ENCODE measurements at regions of chr3 and their contacts with region 1.

Region 1: DNA sequence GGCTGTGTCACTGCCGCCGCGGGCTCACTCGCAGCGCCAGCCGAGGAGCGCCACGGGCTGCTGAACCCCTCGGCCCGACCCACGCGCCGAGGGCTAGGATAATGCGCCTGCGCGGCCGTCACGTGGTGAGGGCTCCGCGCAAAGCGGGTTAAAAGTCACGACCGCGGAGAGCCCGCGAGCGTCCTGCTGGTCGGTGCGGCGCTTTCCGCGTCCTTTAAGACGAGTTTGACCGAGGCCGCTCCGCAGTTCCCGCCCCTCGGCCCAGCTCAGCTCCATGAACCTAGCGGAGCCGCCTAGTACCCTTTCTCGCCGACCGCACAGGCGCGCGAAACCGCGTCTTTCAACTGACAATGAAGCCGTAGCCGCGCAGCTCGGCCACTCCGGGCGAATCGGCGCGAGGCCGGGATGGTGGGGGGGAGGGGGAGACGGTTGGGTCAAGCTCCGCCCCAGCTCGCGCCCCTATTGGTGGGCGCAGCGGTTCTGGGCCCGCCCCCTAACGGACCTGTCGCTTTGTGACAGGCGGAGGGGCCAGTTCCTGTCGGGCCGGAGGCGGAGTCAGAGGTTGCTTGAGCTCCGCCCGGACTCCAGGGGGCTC is 636 bp upstream of the STT3B start:
- DNase-seq: peak; percentile 98
- ATAC-seq: peak; percentile 80
- H3K4me3 Mint-ChIP-seq: no peak overlapping the region
- H3K27ac Mint-ChIP-seq: peak overlapping the region; percentile 99
- H3K4me1 Mint-ChIP-seq: peaks cover 8% of the 10 kb centered on the region
- H3K27me3 Mint-ChIP-seq: no peaks in the 10 kb centered on the region

Region 2: DNA sequence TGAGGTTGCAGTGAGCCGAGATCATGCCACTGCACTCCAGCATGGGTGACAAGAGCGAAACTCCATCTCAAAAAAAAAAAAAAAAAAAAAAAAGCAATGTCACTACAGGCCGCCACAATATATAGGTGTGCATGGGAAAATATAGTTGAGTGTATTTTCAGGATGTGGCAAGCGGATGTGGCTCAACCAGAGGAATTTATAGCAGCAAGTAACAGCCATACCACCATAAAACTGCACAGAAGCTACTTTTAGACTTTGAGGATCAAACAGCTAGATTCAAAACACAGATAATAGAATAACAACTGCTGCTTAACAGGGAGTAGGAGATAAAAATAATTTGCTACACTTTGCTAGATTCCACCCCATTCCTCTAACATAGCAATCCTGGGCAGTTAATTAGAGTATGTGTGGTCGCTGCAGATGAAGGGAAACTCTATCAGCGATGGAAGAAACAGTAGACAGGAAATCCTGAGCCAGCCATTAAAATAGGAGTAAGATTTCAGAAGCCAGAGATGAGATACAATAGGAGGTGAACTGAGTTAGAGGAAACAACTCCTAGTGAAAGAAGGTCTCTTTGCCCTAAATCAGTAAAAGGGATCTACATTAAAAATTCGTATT is 318.1 kb before region 1 on chr3:
- POLR2A ChIA-PET with region 1: interaction called, 40 read pairs
- DNase-seq: no peak
- ATAC-seq: peak; percentile 84
- H3K4me3 Mint-ChIP-seq: peak overlapping the region; percentile 76
- H3K27ac Mint-ChIP-seq: peak overlapping the region; percentile 84
- H3K4me1 Mint-ChIP-seq: peaks cover 42% of the 10 kb centered on the region
- H3K27me3 Mint-ChIP-seq: no peaks in the 10 kb centered on the region

Region 3: GRCh38 chr3:31227131-31227562 is 304.9 kb before region 1 on chr3:
- POLR2A ChIA-PET with region 1: interaction called, 23 read pairs
- DNase-seq: no peak
- ATAC-seq: no peak
- H3K4me3 Mint-ChIP-seq: peak overlapping the region; percentile 76
- H3K27ac Mint-ChIP-seq: peak overlapping the region; percentile 88
- H3K4me1 Mint-ChIP-seq: peaks cover 60% of the 10 kb centered on the region
- H3K27me3 Mint-ChIP-seq: no peaks in the 10 kb centered on the region

Region 4: DNA sequence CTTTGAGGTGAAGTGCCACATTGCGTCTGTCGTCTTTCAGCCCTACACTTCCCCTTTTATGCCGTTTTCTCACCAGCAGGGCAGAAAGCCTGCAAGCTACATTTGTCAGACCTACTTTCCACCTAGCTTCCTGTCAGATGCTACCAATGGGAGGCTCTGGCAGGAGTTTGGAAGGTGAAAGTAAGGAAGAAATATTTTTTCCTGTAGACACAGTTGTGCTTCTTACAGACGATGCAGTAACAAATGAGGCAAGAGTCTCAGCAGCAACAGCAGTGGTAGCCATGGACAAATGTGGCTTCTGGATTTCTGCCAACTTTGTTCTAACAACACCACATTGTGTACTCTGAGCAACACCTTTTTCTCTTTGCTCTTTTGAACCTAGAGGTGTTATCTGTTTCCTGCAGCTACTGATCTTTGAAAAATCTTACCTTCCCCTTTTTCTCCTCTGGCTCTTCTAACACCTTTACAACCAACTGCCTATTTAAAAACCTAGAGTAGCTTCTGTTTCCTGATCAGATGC is 70.0 kb before region 1 on chr3:
- POLR2A ChIA-PET with region 1: interaction called, 34 read pairs
- DNase-seq: no peak
- ATAC-seq: peak; percentile 85
- H3K4me3 Mint-ChIP-seq: peak overlapping the region; percentile 26
- H3K27ac Mint-ChIP-seq: peak overlapping the region; percentile 70
- H3K4me1 Mint-ChIP-seq: peaks cover 14% of the 10 kb centered on the region
- H3K27me3 Mint-ChIP-seq: no peaks in the 10 kb centered on the region

Region 5: DNA sequence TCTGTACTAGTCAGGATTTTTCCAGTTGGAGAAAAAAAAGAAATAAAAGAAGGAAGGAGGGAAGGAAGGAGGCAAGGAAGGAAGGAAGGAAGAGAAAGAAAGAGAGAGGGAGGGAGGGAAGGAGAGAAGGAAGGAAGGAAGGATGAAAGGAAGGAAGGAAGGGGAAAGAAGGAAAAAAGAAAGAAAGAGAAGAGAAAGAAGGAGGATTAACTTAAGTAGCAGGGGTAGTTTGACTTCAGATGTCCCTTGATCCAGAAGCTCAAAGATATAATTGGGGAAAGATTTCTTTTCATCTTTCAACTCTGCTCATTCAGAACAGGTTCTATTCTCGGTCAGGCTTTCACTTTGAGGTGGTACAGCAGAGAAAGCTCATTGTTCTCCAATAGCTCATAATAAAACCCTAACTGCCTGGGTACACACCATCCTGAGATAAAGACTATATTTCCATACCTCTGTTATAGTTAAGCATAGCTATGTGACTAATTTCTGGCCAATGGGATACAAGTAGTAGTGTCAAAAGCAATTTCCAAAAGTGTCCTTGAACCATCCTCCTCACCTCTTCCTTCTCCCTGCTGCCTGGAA is 22.9 kb before region 1 on chr3:
- POLR2A ChIA-PET with region 1: interaction called, 32 read pairs
- DNase-seq: no peak
- ATAC-seq: peak; percentile 35
- H3K4me3 Mint-ChIP-seq: peak overlapping the region; percentile 67
- H3K27ac Mint-ChIP-seq: peak overlapping the region; percentile 72
- H3K4me1 Mint-ChIP-seq: peaks cover 47% of the 10 kb centered on the region
- H3K27me3 Mint-ChIP-seq: no peaks in the 10 kb centered on the region

Region 6: GRCh38 chr3:31515486-31516284 is 16.4 kb before region 1 on chr3:
- POLR2A ChIA-PET with region 1: interaction called, 58 read pairs
- DNase-seq: no peak
- ATAC-seq: no peak
- H3K4me3 Mint-ChIP-seq: no peak overlapping the region
- H3K27ac Mint-ChIP-seq: no peak overlapping the region
- H3K4me1 Mint-ChIP-seq: peaks cover under 1% of the 10 kb centered on the region
- H3K27me3 Mint-ChIP-seq: no peaks in the 10 kb centered on the region

Region 7: DNA sequence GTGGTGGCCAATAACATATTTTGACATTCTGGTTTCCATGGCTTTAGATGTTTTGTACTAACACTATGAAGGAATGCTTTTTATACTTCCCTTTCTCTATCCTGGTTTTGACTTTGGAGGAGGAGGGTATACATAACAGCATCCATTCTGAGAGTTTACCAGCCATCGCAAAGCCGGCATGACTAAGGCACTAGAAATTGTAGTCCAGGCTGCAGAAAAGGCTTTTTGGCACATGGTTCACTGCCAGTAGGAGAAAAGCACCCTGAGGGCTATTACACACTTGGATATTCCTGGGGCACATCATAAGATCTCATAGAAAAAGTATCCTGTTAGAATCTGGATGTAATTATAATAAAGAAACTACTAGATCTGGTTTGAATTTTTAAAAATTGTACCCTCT is 102.4 kb after region 1 on chr3:
- POLR2A ChIA-PET with region 1: interaction called, 10 read pairs
- DNase-seq: no peak
- ATAC-seq: no peak
- H3K4me3 Mint-ChIP-seq: no peak overlapping the region
- H3K27ac Mint-ChIP-seq: peak overlapping the region; percentile 38
- H3K4me1 Mint-ChIP-seq: peaks cover 32% of the 10 kb centered on the region
- H3K27me3 Mint-ChIP-seq: no peaks in the 10 kb centered on the region